Activated T-helper 1 cell treated with anti-CD3 and anti-CD28 coated beads, Interleukin-12 subunit alpha, Interleukin-12 subunit beta, Interleukin-2, Interleukin-4 antibody, amounts not matched to agents 30 ng/mL and 10 ng/mL and 1 ng/mL, durations not matched to agents 14 hours and 24 hours and 36 hours (primary cell): ENCODE measurements at regions of chr16 and their contacts with region 1.

Region 1: DNA sequence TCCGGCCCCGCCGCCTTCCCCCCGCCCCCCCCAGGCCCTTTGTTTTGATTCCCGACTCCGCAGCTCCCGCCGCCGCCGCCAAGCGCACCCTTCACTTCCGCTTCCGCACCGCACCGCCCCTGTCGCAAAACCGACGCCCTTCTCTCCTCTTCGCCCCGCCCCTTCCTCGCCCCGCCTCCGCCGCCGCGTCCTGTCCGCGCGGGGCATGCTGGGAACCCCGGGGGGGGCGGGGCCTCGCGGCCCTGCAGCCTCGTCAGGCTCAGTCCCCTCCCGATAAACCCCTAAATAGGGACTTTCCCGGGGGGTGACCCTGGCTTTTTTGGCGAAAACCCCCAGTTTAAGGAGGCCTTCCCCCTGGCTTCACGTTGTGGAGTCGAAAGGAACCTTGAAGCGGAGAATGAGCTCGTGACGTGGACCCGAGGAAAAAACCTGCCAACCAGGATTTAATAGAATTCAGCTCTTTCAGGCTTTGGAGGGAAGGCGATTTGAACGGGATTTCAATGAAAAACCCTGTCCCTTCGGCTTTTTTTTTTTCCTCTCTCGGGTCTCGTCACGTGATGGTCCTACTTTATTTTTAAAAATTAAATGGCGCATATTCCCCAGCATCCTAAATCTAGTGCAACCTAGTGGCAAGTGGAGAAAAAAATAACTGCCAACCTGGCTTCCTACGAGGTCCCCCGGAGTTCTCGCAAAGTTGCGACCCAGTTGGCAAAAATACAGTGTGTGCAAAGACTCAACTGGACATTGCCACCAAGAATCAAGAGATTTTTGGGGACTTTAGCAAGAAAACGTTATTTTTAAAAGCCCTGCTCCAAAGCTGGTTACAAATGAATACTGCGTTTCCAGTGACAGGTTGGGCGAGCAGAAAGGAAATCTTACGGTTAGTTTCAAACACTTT is at the start of gene MARF1:
- DNase-seq: peak; percentile 98
- H3K4me3 Mint-ChIP-seq: peak within 1 kb of the TSS; percentile 96
- H3K27ac Mint-ChIP-seq: peak within 1 kb of the TSS; percentile 96
- H3K4me1 Mint-ChIP-seq: peaks cover 49% of the 10 kb centered on the region
- H3K27me3 Mint-ChIP-seq: no peaks in the 10 kb centered on the region
- total RNA-seq, gene MARF1: 58.8 and 58.9 TPM in 2 replicates

Region 2: GRCh38 chr16:15055141-15056053 is 587.9 kb before region 1 on chr16:
- intact Hi-C with region 1: loop called (anchors 5 kb)
- DNase-seq: no peak
- H3K4me3 Mint-ChIP-seq: peak overlapping the region; percentile 89
- H3K27ac Mint-ChIP-seq: peak overlapping the region; percentile 51
- H3K4me1 Mint-ChIP-seq: peaks cover 15% of the 10 kb centered on the region
- H3K27me3 Mint-ChIP-seq: no peaks in the 10 kb centered on the region

Region 3: DNA sequence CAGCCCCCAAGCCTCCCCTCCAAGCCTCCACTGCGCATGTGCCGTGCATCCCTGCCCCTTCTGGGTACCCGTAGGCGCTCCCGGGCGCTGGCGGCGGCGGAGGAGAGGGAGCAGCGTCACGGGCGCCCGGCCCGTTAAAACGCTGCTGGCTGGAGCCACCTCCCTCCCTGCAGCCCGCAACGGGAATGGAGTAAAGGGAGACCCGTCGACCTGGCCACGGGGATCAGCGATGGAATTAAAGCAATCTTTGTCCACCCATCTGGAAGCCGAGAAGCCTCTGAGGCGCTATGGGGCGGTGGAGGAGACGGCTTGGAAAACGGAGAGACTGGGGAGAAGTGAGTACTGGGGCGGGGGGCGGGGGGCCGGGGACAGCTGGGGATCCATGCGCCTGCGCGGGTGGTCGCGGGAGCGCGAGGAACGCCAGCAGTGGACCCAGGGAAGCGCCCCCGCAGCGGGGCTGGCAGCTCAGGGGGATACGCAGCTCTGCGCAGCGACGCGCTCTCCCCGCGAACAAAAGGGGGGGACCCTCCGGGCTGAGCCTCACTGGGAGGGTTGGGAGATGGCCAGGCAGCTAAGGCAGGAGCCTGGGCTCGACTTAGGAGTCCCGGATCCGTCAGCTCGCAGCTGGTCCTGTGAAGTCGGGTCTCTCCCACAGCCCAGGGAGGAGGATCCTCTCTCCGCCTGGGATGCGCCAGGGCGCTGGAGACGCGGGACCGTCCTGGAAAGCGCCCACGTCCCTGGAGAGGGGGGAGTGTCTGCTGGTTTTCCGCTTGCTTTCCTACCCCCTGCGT is 208.7 kb before region 1 on chr16 and contains the start of gene BMERB1:
- intact Hi-C with region 1: loop called (anchors 2 kb)
- DNase-seq: peak; percentile 31
- H3K4me3 Mint-ChIP-seq: peak within 1 kb of the TSS; percentile 93
- H3K27ac Mint-ChIP-seq: peak within 1 kb of the TSS; percentile 52
- H3K4me1 Mint-ChIP-seq: peaks cover 17% of the 10 kb centered on the region
- H3K27me3 Mint-ChIP-seq: peaks cover 23% of the 10 kb centered on the region
- total RNA-seq, gene BMERB1: 16.0 and 17.4 TPM in 2 replicates

Region 4: DNA sequence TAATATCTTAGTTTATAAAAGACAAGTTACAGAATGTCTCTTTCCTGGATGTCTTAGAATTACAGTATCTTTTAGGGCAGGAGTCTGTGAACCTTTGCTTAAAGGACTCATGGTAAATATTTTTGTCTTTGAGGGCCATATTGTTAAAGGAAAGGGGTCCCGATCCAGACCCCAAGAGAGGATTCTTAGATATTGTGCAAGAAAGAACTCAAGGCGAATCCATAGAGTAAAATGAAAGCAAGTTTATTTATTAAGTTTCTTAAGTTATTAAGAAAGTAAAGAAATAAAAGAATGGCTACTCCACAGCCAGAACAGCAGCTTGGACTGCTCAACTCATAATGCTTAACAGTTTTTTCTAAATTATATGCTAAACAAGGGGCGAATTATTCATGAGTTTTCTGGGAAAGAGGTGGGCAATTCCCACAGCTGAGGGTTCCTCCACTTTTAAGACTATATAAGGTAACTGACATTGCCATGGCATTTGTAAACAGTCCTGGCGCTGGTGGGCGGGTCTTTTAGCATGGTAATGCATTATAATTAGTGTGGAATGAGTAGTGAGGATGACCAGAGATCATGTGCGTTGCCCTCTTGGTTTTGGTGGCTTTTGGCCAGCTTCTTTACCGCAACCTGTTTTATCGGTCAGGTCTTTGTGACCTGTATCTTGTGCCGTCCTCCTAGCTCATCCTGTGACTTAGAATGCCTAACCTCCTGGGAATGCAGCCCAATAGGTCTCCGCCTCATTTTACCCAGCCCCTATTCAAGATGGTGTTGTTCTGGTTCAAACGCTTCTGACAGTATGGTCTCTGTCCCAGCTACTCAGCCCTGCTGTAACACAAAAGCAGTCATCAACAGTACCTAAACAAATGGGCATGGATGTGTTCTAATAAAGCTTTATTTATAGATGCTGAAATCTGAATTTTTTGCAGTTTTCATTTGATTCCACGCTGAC is 155.7 kb before region 1 on chr16:
- intact Hi-C with region 1: loop called (anchors 1 kb)
- DNase-seq: no peak
- H3K4me3 Mint-ChIP-seq: no peak overlapping the region
- H3K27ac Mint-ChIP-seq: no peak overlapping the region
- H3K4me1 Mint-ChIP-seq: peaks cover 37% of the 10 kb centered on the region
- H3K27me3 Mint-ChIP-seq: no peaks in the 10 kb centered on the region

Region 5: DNA sequence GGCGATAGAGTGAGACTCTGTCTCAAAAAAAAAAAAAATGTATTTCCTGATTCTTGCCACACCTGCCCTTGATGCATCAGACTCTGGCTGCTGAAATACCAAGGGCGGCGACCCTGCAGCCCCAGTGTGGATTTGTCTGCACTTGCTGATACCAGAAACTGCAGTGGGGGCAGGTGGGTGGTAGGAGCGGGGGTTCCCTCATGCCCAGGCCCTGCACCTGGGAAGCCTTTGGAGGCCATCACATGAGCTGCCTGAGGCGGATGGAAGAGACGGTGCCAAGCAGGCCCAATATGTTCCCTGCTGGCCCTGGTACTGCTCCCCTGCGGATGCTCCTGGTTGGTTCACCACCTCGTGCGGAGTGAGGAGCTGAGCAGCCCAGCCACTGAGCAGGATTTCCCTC is 51.0 kb before region 1 on chr16:
- intact Hi-C with region 1: loop called (anchors 1 kb)
- DNase-seq: no peak
- H3K4me3 Mint-ChIP-seq: no peak overlapping the region
- H3K27ac Mint-ChIP-seq: peak overlapping the region; percentile 61
- H3K4me1 Mint-ChIP-seq: peaks cover 64% of the 10 kb centered on the region
- H3K27me3 Mint-ChIP-seq: no peaks in the 10 kb centered on the region

Region 6: DNA sequence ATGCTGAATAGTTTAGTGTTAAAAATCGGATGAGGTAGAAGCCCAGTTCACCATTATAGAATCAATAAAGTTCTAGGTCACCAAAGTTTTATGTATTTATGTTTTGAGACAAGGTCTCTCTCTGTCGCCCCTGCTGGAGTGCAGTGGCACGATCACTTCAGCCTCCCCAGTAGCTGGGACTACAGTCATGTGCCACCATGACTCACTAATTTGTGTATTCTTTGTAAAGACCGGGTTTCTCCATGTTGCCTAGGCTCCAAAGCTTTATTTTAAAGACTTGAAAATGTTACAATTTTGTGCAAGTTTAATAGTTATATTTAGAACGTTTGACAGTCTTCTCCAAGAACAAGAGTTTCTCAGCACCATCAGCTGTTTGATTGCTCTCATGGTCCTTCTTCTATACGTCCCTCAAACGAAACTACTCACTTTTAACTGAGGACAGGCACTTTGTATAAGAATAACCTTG is 38.8 kb after region 1 on chr16:
- intact Hi-C with region 1: loop called (anchors 1 kb)
- DNase-seq: peak; percentile 25
- H3K4me3 Mint-ChIP-seq: no peak overlapping the region
- H3K27ac Mint-ChIP-seq: peak overlapping the region; percentile 19
- H3K4me1 Mint-ChIP-seq: peaks cover 12% of the 10 kb centered on the region
- H3K27me3 Mint-ChIP-seq: no peaks in the 10 kb centered on the region

Region 7: DNA sequence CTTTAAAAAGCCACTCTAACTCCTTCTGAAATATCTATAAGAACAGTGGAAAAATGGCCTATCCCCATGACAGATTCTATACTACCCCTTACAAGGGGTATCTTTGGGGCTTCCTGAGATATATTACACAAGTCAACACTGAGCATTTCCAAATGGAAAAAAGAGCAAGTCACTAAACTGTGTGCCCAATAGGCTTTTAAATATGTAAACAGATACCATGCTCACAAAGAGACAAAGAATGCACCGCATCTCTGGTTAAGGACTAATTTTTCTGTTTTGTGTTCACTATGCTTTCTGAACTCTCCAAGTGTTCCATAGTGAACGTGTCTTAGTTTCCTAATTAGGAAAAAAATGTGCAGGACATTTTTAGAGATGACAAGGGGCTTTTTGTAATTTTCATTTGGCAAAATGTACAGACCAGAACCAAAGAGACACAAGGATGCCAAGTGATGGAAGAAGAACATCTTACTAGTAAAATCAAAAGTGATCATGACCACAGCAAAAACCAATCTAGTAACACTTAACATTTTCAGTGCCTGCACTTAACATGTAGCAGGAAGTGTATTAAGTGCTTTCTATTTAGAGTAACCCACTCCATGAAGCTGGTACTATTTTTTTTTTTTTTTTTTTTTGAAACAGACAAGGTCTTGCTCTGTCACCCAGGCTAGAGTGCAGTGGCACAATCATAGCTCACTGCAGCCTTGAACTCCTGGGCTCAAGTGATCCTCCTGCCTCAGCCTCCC is 192.0 kb after region 1 on chr16:
- intact Hi-C with region 1: no loop called
- DNase-seq: no peak
- H3K4me3 Mint-ChIP-seq: no peak overlapping the region
- H3K27ac Mint-ChIP-seq: no peak overlapping the region
- H3K4me1 Mint-ChIP-seq: peaks cover 10% of the 10 kb centered on the region
- H3K27me3 Mint-ChIP-seq: peaks cover 7% of the 10 kb centered on the region

Region 8: GRCh38 chr16:15846510-15846909 is 203.2 kb after region 1 on chr16:
- intact Hi-C with region 1: no loop called
- DNase-seq: no peak
- H3K4me3 Mint-ChIP-seq: no peak overlapping the region
- H3K27ac Mint-ChIP-seq: no peak overlapping the region
- H3K4me1 Mint-ChIP-seq: no peaks in the 10 kb centered on the region
- H3K27me3 Mint-ChIP-seq: peaks cover 10% of the 10 kb centered on the region

Region 9: DNA sequence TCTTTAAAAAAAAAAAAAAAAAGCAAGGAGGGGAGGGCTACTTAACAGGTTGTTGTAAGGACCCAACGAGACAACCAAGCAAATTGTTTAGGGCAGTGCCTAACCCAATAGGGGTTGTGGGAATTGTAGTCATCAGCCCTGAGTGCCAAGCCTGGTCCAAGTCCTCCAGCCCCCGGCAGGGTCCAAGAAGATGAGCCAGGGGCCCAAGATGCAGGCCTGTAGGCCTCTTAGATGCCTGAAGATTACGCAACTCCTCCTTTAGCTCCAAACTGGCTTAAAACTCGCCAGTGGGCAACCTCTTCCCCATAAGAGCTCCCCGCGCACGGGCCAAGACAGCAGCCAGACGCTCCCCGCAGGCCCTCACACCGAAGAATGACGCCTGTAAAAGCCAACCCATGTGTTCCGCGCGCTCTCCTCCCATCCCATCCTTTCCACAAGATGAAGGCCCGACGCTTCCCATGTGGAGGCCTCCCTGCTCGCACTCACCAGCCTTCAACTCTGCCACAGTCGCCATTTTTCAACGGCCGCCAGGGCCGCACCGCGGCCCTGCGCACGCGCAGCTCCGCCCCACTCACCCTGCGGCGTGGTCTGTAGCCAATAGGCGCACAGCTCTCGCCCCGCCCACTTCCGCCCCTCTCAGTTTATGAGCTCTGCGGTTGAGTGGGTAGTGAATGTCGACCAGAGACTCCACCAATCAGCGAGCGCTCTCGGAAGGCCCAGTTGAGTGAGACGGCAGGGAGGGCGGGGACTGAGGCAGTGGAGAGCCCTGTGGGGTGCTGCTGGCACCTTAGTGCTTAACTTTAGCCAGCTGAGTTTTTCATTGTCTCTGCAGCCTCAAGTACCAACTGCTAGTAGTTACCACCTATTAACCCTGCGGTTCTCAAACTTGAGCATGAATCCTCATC is 245.0 kb after region 1 on chr16 and contains the start of gene CEP20:
- intact Hi-C with region 1: loop called (anchors 5 kb)
- DNase-seq: peak; percentile 99
- H3K4me3 Mint-ChIP-seq: peak within 1 kb of the TSS; percentile 95
- H3K27ac Mint-ChIP-seq: peak within 1 kb of the TSS; percentile 94
- H3K4me1 Mint-ChIP-seq: peaks cover 27% of the 10 kb centered on the region
- H3K27me3 Mint-ChIP-seq: no peaks in the 10 kb centered on the region
- total RNA-seq, gene CEP20: 36.7 and 50.2 TPM in 2 replicates